Ovary (tissue), 10 donors: ENCODE measurements at regions of chr4 and their contacts with region 1.

Region 1: GRCh38 chr4:14441561-14441960 is 560.7 kb upstream of the CPEB2 start:
- DNase-seq: no peak
- H3K4me3 ChIP-seq: no peak overlapping the region
- H3K27ac ChIP-seq: no peak overlapping the region
- H3K4me1 ChIP-seq: no peaks in the 10 kb centered on the region
- H3K27me3 ChIP-seq: no peaks in the 10 kb centered on the region
- CTCF ChIP-seq: no peak
- EP300 ChIP-seq: no peak
- POLR2A ChIP-seq: no peak

Region 2: GRCh38 chr4:14575289-14575688 is 133.7 kb after region 1 on chr4:
- intact Hi-C with region 1: loop called in 1 of 4 experiments (anchors 5 kb)
- DNase-seq: no peak
- H3K4me3 ChIP-seq: no peak overlapping the region
- H3K27ac ChIP-seq: no peak overlapping the region
- H3K4me1 ChIP-seq: no peaks in the 10 kb centered on the region
- H3K27me3 ChIP-seq: no peaks in the 10 kb centered on the region
- CTCF ChIP-seq: no peak
- EP300 ChIP-seq: no peak
- POLR2A ChIP-seq: no peak

Region 3: GRCh38 chr4:15327311-15328298 is 886.0 kb after region 1 on chr4:
- intact Hi-C with region 1: no loop called
- DNase-seq: no peak
- H3K4me3 ChIP-seq: no peak overlapping the region
- H3K27ac ChIP-seq: no peak overlapping the region
- H3K4me1 ChIP-seq: peaks cover 2% of the 10 kb centered on the region
- H3K27me3 ChIP-seq: no peaks in the 10 kb centered on the region
- CTCF ChIP-seq: no peak
- EP300 ChIP-seq: no peak
- POLR2A ChIP-seq: no peak